HCT116 (cell line): ENCODE measurements at regions of chr11 and their contacts with region 1.

Region 1: DNA sequence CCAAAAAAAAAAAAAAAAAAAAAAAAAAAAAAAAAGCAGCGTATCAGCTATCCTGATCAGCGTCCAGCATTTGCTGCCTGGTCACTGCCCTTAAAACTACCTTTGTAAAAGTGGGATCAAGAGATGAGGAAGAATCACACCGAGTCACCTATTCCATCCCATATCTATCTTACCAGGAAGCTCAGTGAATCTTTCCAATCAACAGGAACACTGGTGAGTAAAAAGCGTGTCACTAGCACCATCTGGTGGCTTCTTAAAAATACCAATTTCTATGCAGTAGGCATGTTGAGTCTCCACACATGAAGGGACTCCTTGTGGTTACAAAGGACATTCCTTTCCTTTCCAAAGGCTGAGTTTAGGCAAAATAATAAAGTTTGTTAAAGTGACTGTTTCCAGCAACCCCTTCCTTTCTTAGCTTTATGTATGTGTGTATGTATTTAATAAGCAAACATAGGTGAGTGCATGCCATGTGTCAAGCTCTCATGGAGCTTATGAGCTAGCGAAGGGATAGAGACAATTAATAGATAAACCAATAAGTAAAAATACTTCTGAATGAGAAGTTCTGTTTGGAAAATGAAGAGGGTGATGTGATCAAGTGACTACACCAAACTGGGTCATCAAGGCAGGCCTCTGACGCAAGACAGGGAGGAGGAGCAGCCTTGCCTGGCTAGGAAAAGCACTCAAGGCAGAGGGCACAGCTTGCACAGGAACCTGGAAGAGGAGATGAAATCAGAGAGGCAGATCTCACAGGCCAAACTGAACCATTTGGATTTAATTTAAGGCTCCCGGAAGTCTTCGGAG is 13.9 kb upstream of the TP53AIP1 start:
- DNase-seq: peak; percentile 73
- ATAC-seq: peak; percentile 94
- H3K4me3 ChIP-seq: no peak overlapping the region
- H3K27ac ChIP-seq: no peak overlapping the region
- H3K4me1 ChIP-seq: no peaks in the 10 kb centered on the region
- H3K27me3 ChIP-seq: no peaks in the 10 kb centered on the region
- CTCF ChIP-seq: peak; percentile 58 to 95 (median 76)
- POLR2A ChIP-seq: no peak
- RAD21 ChIP-seq: peak; percentile 94

Region 2: GRCh38 chr11:128437137-128437536 is 519.5 kb before region 1 on chr11:
- CTCF ChIA-PET with region 1: no interaction called
- POLR2A ChIA-PET with region 1: no interaction called
- RAD21 ChIA-PET with region 1: no interaction called
- intact Hi-C with region 1: no loop called
- DNase-seq: no peak
- ATAC-seq: no peak
- H3K4me3 ChIP-seq: no peak overlapping the region
- H3K27ac ChIP-seq: no peak overlapping the region
- H3K4me1 ChIP-seq: no peaks in the 10 kb centered on the region
- H3K27me3 ChIP-seq: no peaks in the 10 kb centered on the region
- CTCF ChIP-seq: no peak
- POLR2A ChIP-seq: no peak
- RAD21 ChIP-seq: no peak

Region 3: GRCh38 chr11:128890543-128891368 is 65.8 kb before region 1 on chr11 and contains the start of gene KCNJ5:
- CTCF ChIA-PET with region 1: interaction called, 213 read pairs
- POLR2A ChIA-PET with region 1: interaction called, 5 read pairs
- RAD21 ChIA-PET with region 1: interaction called, 11 to 14 read pairs
- intact Hi-C with region 1: no loop called
- DNase-seq: no peak
- ATAC-seq: peak; percentile 67
- H3K4me3 ChIP-seq: peak within 1 kb of the TSS; percentile 54 to 67
- H3K27ac ChIP-seq: no peak within 1 kb of the TSS; the same call in 1 of the 2 replicates
- H3K4me1 ChIP-seq: peaks cover 9 to 18% of the 10 kb centered on the region in 2 experiments; a peak in 3 of 4 replicates
- H3K27me3 ChIP-seq: no peaks in the 10 kb centered on the region
- CTCF ChIP-seq: no peak
- POLR2A ChIP-seq: no peak
- RAD21 ChIP-seq: no peak
- total RNA-seq, gene KCNJ5: 0.17 TPM

Region 4: GRCh38 chr11:128905345-128906184 is 51.0 kb before region 1 on chr11:
- CTCF ChIA-PET with region 1: interaction called, 10 read pairs
- POLR2A ChIA-PET with region 1: no interaction called
- RAD21 ChIA-PET with region 1: no interaction called
- intact Hi-C with region 1: loop called (anchors 1 kb)
- DNase-seq: peak; percentile 46
- ATAC-seq: peak; percentile 75
- H3K4me3 ChIP-seq: peak overlapping the region; percentile 58 to 69
- H3K27ac ChIP-seq: peak overlapping the region; percentile 23; the same call in 1 of the 2 replicates
- H3K4me1 ChIP-seq: peaks cover 23 to 42% of the 10 kb centered on the region in 2 experiments
- H3K27me3 ChIP-seq: no peaks in the 10 kb centered on the region
- CTCF ChIP-seq: peak; percentile 24 to 70 (median 61); a peak in 5 of 6 replicates
- POLR2A ChIP-seq: no peak
- RAD21 ChIP-seq: peak; percentile 35